HepG2 (cell line): ENCODE measurements at regions of chr5 and their contacts with region 1.

Region 1: DNA sequence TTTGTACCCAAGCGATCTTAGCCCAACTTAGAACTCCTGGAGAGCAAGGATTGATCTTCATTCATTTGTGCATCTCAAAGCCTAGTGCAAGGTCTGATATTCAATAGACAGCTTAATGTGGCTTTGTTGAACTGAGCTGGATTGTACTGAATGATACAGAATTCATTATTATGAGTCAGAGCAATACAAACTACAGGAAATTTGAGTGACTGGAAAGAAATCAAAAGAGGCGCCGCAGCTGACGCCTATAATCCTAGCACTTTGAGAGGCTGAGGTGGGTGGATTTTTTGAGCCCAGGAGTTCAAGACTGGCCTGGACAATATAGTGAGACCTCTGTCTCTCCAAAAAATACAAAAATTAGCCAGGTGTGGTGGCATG is 58.6 kb downstream of the ENC1 start:
- DNase-seq: no peak
- ATAC-seq: no peak
- H3K4me3 ChIP-seq: no peak overlapping the region
- H3K27ac ChIP-seq: peak overlapping the region; percentile 99
- H3K4me1 ChIP-seq: peaks cover 97% of the 10 kb centered on the region
- H3K27me3 ChIP-seq: no peaks in the 10 kb centered on the region
- CTCF ChIP-seq: no peak
- EP300 ChIP-seq: no peak
- POLR2A ChIP-seq: no peak
- RAD21 ChIP-seq: no peak

Region 2: DNA sequence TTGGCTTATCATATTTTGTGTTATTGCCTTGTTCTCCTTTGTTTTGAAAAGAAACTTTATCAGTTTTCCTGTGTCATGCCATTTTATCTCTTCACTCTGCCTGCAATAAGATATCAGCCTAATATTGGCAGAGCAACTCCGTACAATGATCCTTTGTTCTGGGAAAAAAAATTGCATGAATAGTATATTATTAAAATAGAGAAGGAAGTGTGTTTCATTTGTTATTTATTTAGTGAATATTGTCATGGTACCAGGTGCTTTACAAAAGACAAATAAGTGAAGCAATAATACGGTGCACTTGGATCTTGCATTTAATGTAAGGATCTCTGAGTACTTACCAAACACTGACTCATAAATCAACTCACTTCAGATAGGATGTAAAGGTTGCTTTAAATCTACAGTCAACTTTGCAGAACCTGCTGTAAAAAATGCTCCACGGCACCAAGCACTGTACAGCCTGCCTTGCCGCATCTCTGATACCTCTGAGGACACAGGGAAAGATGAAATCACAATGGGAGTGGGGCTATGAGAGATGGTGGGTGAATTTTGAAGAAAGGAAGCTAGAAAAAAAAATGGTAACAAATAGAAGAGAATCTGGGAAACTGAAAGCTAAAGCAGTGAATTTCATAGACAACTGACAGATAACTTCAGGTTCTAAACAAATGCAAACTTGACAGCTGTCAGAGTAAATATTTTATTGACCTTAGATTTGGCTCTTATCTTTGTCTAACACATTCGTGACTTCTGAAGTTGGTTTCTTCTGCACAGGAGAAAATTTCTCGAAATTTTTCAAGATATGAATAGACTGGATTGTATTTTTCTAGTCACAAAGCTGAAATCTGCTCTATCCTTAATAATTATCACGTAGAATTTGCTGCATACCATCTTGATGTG is 173.6 kb before region 1 on chr5:
- CTCF ChIA-PET with region 1: no interaction called
- POLR2A ChIA-PET with region 1: no interaction called
- in situ Hi-C with region 1: no loop called
- intact Hi-C with region 1: loop called (anchors 5 kb)
- DNase-seq: peak; percentile 96
- ATAC-seq: peak; percentile 96
- H3K4me3 ChIP-seq: peak overlapping the region in 2 of 3 experiments; percentile 35 to 38; a peak in 2 of 6 replicates
- H3K27ac ChIP-seq: peak overlapping the region; percentile 66
- H3K4me1 ChIP-seq: peaks cover 66% of the 10 kb centered on the region
- H3K27me3 ChIP-seq: no peaks in the 10 kb centered on the region
- CTCF ChIP-seq: no peak
- EP300 ChIP-seq: peak; percentile 87 to 92; a peak in 3 of 4 replicates
- POLR2A ChIP-seq: no peak
- RAD21 ChIP-seq: 0 out of 2 replicates have a peak, but pooled peaks have one; percentile 17

Region 3: DNA sequence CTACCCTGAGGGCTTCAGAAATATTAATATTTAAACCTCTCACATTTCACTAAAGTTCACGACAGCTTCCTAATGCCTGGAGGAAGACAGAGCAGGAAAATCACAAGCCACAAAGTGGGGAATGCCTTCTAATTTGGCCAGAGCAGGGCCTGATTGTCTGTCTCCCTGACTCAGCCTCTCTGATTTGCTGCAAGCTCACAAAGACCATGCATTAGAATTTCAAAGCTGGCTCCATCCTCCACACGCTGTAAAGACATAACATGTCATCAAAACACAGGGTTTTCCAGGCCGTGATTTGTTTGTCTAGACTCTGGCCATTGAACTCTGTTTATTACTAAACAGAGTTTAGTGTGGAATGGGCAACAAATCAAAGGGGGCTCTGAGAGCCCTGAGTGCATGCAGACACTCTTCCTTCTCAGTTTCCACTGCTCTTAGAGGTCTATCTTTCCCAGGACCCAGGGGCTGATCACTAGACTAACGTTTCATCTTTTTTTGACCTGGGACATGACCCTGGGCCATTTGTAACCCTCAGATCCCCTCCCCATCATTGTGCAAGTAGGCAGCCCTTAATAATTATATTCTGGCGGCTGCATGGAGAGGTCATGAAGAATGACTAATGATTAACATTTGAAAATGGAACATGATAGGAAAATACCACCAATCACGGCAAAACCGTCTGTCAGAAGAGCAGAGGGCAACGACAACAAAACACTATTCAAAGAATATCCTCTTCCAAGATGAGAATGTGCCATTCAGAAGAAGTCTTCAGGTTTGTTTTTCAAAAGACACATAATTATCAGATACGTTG is 81.7 kb before region 1 on chr5:
- CTCF ChIA-PET with region 1: no interaction called
- POLR2A ChIA-PET with region 1: interaction called, 3 read pairs
- in situ Hi-C with region 1: no loop called
- intact Hi-C with region 1: loop called (anchors 5 kb)
- DNase-seq: peak; percentile 96
- ATAC-seq: peak; percentile 83
- H3K4me3 ChIP-seq: peak overlapping the region; percentile 43 to 50 (median 47); a peak in 5 of 6 replicates
- H3K27ac ChIP-seq: peak overlapping the region; percentile 72
- H3K4me1 ChIP-seq: peaks cover 80% of the 10 kb centered on the region
- H3K27me3 ChIP-seq: no peaks in the 10 kb centered on the region
- CTCF ChIP-seq: no peak
- EP300 ChIP-seq: peak in 1 of 2 experiments; percentile 94; a peak in 2 of 4 replicates
- POLR2A ChIP-seq: 0 out of 4 replicates have a peak, but pooled peaks of 1 of the 2 experiments have one; percentile 19
- RAD21 ChIP-seq: no peak

Region 4: DNA sequence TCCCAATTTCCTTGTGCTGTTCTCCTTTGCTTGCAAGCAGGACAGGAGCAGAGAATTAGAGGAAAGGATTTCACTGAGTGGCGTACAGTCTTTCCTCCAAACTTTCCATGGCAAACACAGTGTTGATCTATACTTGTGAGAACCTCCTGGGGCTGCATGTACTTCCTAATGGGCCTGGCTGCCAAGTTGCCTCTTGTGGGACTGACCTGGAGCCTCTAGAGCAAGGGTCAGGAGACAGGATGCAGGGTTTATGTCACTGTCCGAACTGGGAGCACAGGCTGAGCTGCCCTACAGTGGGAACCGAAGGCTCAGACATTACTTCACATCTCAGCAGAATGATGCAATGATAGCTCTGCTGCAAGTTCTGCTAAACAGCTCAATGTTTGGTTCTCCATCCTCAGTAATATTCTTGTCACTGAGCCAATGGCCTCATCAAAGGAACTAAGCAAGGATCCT is 43.7 kb before region 1 on chr5:
- CTCF ChIA-PET with region 1: no interaction called
- POLR2A ChIA-PET with region 1: no interaction called
- in situ Hi-C with region 1: no loop called
- intact Hi-C with region 1: loop called (anchors 10 kb)
- DNase-seq: peak; percentile 89
- ATAC-seq: peak; percentile 99
- H3K4me3 ChIP-seq: peak overlapping the region in 1 of 3 experiments; percentile 32; a peak in 2 of 6 replicates
- H3K27ac ChIP-seq: peak overlapping the region; percentile 51
- H3K4me1 ChIP-seq: peaks cover 61% of the 10 kb centered on the region
- H3K27me3 ChIP-seq: no peaks in the 10 kb centered on the region
- CTCF ChIP-seq: 0 out of 2 replicates have a peak, but pooled peaks have one; percentile 8
- EP300 ChIP-seq: peak; percentile 57 to 87; a peak in 2 of 4 replicates
- POLR2A ChIP-seq: 0 out of 4 replicates have a peak, but pooled peaks of 1 of the 2 experiments have one; percentile 18
- RAD21 ChIP-seq: no peak